CD8-positive, alpha-beta T cell (primary cell): ENCODE measurements at regions of chr18 and their contacts with region 1.

Region 1: GRCh38 chr18:75247611-75248421 is 37.2 kb downstream of the TSHZ1 start:
- DNase-seq: peak in 2 of 9 experiments; percentile 50 to 72
- ATAC-seq: peak; percentile 43
- H3K4me3 ChIP-seq: peak overlapping the region; percentile 34 to 36
- H3K4me3 Mint-ChIP-seq: peak overlapping the region; percentile 85
- H3K27ac ChIP-seq: peak overlapping the region; percentile 36 to 67
- H3K27ac Mint-ChIP-seq: peak overlapping the region; percentile 94
- H3K4me1 ChIP-seq: peaks cover 48% of the 10 kb centered on the region
- H3K4me1 Mint-ChIP-seq: peaks cover 80% of the 10 kb centered on the region
- H3K27me3 ChIP-seq: no peaks in the 10 kb centered on the region
- H3K27me3 Mint-ChIP-seq: no peaks in the 10 kb centered on the region
- CTCF ChIP-seq: no peak

Region 2: GRCh38 chr18:74623047-74623816 is 624.6 kb before region 1 on chr18:
- CTCF ChIA-PET with region 1: no interaction called
- POLR2A ChIA-PET with region 1: no interaction called
- intact Hi-C with region 1: loop called in 1 of 2 experiments (anchors 10 kb)
- DNase-seq: peak in 5 of 9 experiments; percentile 21 to 51 (median 39)
- ATAC-seq: no peak
- H3K4me3 ChIP-seq: no peak overlapping the region
- H3K4me3 Mint-ChIP-seq: no peak overlapping the region
- H3K27ac ChIP-seq: no peak overlapping the region
- H3K27ac Mint-ChIP-seq: no peak overlapping the region
- H3K4me1 ChIP-seq: peaks cover 12% of the 10 kb centered on the region
- H3K4me1 Mint-ChIP-seq: peaks cover 2% of the 10 kb centered on the region
- H3K27me3 ChIP-seq: no peaks in the 10 kb centered on the region
- H3K27me3 Mint-ChIP-seq: no peaks in the 10 kb centered on the region
- CTCF ChIP-seq: peak; percentile 75

Region 3: DNA sequence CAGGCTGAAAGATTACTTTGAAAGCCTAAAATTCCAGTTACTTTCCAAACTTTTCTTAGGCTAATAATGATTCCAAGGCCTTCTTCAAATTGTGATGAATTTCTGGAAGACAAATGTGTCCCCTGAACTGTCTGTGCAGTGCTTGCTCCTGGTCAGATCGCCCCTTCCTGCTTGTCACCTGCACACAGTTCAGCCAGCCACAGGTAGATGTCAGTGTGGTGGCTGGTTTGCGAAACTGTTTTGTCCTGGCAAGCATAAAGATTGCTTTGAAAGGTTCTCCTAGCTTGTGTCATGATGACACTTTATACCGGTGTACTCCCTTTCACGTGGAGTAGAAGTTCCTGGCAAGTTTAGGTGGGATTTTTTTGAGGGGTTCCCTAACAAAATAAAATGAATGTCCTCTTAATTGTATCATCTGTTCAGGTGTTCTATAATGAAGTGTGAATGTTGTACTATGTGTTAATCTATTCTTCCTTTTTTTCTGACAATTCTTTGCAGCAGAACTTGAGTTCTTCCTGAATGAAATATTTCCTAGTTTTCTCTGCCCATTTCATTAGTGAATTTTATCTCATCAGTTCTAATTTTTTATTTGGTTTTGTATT is 351.3 kb before region 1 on chr18:
- CTCF ChIA-PET with region 1: no interaction called
- POLR2A ChIA-PET with region 1: interaction called, 3 read pairs
- intact Hi-C with region 1: loop called (anchors 2 to 5 kb)
- DNase-seq: peak in 8 of 9 experiments; percentile 24 to 68 (median 44)
- ATAC-seq: peak; percentile 64
- H3K4me3 ChIP-seq: no peak overlapping the region
- H3K4me3 Mint-ChIP-seq: no peak overlapping the region
- H3K27ac ChIP-seq: no peak overlapping the region
- H3K27ac Mint-ChIP-seq: no peak overlapping the region
- H3K4me1 ChIP-seq: no peaks in the 10 kb centered on the region
- H3K4me1 Mint-ChIP-seq: peaks cover 7% of the 10 kb centered on the region
- H3K27me3 ChIP-seq: no peaks in the 10 kb centered on the region
- H3K27me3 Mint-ChIP-seq: no peaks in the 10 kb centered on the region
- CTCF ChIP-seq: peak; percentile 60

Region 4: DNA sequence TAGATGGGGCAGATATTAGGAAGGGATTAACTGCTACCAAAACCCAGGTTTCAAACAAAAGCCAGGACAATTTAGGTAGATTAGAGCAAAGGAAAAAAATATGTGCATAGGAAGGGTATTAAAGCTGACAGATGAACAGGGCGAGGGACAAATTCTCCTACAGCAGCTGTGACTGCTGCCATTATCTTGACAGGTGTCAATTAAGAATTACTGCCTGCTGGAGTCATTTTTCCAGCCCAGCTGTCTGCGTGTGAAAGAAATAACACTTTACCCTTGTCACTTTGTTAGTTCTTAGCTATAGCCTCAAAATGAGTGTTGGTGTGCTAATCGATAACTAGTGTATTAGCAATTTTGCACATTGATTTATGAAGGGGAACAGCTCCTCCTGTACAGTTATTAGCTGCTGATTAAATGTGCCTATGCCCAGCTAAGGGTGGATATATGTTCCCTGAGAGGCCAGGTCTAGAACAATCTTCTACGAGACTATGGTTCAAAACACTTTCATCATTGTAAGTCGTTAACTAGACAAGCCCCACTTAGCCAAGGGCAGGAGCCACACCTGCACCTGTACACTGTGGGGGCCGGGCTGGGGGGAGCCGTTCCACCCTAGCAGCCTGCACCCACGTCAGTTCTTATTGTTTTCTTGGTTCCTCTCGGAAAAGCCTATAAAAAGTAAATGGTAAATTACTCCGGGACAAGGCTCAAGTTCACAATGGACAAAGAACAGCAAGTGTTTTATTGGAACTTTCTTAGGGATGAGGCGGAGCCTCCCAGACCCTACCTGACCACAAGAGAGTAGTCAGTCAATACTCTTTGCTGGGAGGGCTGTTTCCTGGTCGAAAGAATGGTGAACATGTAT is 29.5 kb before region 1 on chr18:
- CTCF ChIA-PET with region 1: interaction called, 7 read pairs
- POLR2A ChIA-PET with region 1: interaction called, 4 read pairs
- intact Hi-C with region 1: loop called in 1 of 2 experiments (anchors 2 kb)
- DNase-seq: no peak
- ATAC-seq: no peak
- H3K4me3 ChIP-seq: no peak overlapping the region
- H3K4me3 Mint-ChIP-seq: no peak overlapping the region
- H3K27ac ChIP-seq: peak overlapping the region in 1 of 2 experiments; percentile 89
- H3K27ac Mint-ChIP-seq: peak overlapping the region; percentile 30
- H3K4me1 ChIP-seq: peaks cover 56% of the 10 kb centered on the region
- H3K4me1 Mint-ChIP-seq: peaks cover 86% of the 10 kb centered on the region
- H3K27me3 ChIP-seq: no peaks in the 10 kb centered on the region
- H3K27me3 Mint-ChIP-seq: no peaks in the 10 kb centered on the region
- CTCF ChIP-seq: no peak

Region 5: DNA sequence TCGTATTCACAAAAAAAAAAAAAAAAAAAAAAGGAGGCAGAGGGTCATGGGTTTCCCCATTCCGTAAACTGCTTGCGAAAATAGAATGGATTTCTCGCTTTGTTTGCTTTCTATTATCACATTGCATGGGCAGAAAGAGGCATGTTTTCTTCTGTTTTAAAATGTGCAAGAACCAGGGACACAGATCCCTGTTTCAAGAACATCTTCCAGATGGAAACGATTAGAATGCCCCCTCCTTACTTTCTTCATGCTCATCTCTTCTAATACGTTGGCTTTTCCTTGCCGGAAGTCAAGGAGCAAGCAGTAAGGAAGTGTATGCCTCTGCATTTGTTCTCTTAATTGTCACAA is 1298.2 kb after region 1 on chr18:
- CTCF ChIA-PET with region 1: no interaction called
- POLR2A ChIA-PET with region 1: no interaction called
- intact Hi-C with region 1: no loop called
- DNase-seq: no peak
- ATAC-seq: no peak
- H3K4me3 ChIP-seq: no peak overlapping the region
- H3K4me3 Mint-ChIP-seq: no peak overlapping the region
- H3K27ac ChIP-seq: no peak overlapping the region
- H3K27ac Mint-ChIP-seq: no peak overlapping the region
- H3K4me1 ChIP-seq: no peaks in the 10 kb centered on the region
- H3K4me1 Mint-ChIP-seq: no peaks in the 10 kb centered on the region
- H3K27me3 ChIP-seq: no peaks in the 10 kb centered on the region
- H3K27me3 Mint-ChIP-seq: peaks cover 8% of the 10 kb centered on the region
- CTCF ChIP-seq: no peak